ENCODE measurements at regions of chr22 and their contacts with region 1.

Region 1: DNA sequence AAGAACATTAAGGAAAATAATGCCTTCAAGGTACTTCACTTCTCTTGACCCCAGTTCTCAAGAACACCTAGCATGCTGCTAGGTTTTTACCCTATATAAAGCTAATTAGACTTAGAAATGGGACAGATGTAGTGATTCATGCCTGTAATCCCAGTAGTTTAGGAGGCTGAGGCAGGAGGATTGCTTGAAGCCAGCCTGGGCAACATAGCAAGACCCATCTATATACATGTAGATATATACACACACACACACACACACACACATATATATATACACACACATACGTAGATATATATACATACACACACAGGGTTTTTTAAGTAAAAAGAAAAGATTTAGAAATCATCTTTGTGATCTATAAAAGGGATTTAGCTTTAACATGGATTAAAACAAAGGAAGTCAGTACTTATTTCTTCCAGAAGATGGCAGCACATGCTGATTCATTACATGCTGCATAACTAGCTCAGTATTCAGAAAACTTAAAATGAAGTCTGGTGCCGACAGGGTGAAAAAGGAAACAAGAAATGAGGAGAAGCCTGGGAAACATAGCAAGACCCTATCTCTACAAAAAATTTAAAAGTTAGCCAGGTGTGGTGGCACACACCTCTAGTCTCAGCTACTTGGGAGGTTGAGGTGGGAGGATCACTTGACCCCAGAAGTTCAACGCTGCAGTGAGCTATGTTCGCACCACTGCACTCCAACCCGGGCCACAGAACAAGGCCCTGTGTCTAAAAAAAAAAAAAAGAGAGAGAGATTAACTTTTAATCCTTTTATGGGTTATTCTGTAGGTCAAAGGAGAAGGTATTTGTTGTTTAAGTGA is 28.5 kb upstream of the RBX1 start:
- H3K4me3 ChIP-seq: no peak overlapping the region
- H3K27ac ChIP-seq: no peak overlapping the region
- H3K4me1 ChIP-seq: no peaks in the 10 kb centered on the region
- CTCF ChIP-seq: 0 out of 2 replicates have a peak, but pooled peaks have one; percentile 49

Region 2: DNA sequence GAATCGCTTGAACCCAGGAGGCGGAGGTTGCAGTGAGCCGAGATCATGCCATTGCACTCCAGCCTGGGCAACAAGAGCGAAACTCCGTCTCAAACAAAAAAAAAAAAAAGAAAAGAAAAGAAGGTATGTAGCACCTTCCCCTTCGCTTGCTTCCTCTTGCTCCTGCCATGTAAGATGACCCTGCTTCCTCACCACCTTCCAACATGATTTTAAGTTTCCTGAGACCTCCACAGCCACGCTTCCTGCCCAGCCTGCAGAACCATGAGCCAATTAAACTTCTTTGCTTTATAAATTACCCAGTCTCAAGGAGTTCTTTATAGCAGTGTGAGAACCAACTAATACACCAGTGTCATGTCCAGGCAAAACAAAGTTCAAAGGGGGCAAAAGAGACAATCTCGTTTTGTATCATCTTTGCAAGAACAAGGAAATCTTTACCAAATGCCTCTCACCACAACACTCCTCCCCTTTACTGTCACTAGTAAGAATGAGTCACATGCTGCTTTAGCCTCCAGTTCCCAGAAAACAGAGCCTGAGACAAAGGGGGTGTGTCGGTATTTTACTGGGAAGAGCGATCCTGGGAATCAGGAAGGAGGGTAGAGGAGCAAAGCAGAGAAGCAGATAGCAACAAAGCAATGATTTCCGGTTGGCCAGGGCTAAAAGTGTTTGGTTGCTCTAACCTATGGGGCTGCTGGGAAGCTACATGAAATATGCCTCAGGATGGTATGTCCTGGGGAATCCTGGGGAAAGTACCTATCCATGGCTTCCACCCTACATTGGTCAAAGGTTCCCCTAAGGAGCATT is 253.9 kb before region 1 on chr22:
- CTCF ChIA-PET with region 1: no interaction called
- POLR2A ChIA-PET with region 1: no interaction called
- H3K4me3 ChIP-seq: no peak overlapping the region
- H3K27ac ChIP-seq: no peak overlapping the region
- H3K4me1 ChIP-seq: no peaks in the 10 kb centered on the region; the same call in 1 of the 2 replicates
- CTCF ChIP-seq: no peak

Region 3: GRCh38 chr22:40911772-40912171 is 10.9 kb before region 1 on chr22:
- CTCF ChIA-PET with region 1: interaction called, 18 read pairs
- POLR2A ChIA-PET with region 1: no interaction called
- H3K4me3 ChIP-seq: no peak overlapping the region
- H3K27ac ChIP-seq: no peak overlapping the region
- H3K4me1 ChIP-seq: no peaks in the 10 kb centered on the region
- CTCF ChIP-seq: no peak

Region 4: GRCh38 chr22:41001722-41002122 is 79.0 kb after region 1 on chr22:
- CTCF ChIA-PET with region 1: interaction called, 13 read pairs
- POLR2A ChIA-PET with region 1: no interaction called
- H3K4me3 ChIP-seq: no peak overlapping the region
- H3K27ac ChIP-seq: no peak overlapping the region
- H3K4me1 ChIP-seq: no peaks in the 10 kb centered on the region
- CTCF ChIP-seq: no peak

Region 5: GRCh38 chr22:41171996-41172395 is 249.3 kb after region 1 on chr22:
- CTCF ChIA-PET with region 1: interaction called, 10 read pairs
- POLR2A ChIA-PET with region 1: no interaction called
- H3K4me3 ChIP-seq: no peak overlapping the region
- H3K27ac ChIP-seq: 0 out of 2 replicates have a peak overlapping the region, but pooled peaks have one; percentile 41
- H3K4me1 ChIP-seq: no peaks in the 10 kb centered on the region
- CTCF ChIP-seq: no peak

Region 6: DNA sequence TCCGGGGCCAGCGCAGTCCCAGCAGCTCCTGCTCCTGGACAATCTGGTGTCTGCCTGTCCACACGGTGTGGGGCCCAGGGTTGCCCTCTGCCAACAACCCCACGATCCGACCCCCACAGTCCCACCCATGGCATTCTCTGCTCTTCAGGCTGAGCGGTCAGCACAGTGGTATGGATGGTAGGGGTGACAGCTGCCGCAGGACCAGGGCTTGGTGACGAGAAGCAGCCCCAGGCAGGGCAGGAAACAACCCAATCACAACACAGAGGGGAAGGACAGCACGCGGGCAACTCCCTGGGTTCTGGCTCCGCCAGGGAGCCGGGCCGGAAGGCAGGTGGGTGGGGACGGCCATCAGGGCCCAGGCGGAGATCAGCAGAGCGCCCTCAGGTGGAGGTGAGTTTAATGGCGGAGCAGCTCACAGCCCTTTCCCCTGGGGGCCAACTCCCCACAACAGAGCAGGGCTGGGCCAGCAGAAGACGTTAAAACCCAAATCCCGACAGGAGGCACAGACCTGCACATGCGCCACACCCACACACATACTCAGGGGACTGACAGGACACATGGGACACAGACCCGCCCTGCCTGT is 323.3 kb after region 1 on chr22:
- CTCF ChIA-PET with region 1: interaction called, 14 read pairs
- POLR2A ChIA-PET with region 1: no interaction called
- H3K4me3 ChIP-seq: no peak overlapping the region
- H3K27ac ChIP-seq: no peak overlapping the region
- H3K4me1 ChIP-seq: no peaks in the 10 kb centered on the region
- CTCF ChIP-seq: no peak

Region 7: DNA sequence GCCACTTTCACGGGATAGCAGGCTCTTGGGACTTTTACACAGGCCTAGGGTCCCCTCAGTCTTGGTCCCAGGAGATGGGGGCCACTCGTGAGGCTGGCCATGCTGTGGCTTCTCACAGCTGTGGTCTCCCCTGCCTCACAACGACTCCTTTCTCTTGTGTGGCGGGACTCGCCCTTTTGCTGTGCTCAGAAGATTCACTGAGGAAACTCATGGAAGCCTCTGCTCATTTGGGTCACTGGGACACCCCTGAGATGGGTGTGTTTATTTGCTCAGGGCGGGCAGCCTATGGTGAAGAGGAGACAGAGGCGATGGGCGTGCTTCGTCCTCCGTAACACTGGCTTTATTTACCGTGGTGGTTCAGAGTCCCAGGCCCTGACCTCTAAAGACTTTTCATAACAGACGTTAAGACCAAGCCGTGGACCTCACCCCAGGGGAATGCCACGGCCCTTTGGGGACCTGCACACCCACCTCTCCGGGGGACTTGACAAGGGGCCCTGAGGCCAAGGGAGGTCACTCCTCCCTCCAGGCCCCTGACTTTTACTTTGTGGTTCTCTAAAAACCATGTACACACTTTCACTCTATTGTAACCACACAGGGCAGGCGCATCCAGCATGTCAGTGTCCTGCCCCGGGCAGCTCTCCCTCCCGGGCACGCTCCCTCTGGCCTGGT is 474.6 kb after region 1 on chr22:
- CTCF ChIA-PET with region 1: no interaction called
- POLR2A ChIA-PET with region 1: no interaction called
- H3K4me3 ChIP-seq: no peak overlapping the region
- H3K27ac ChIP-seq: no peak overlapping the region
- H3K4me1 ChIP-seq: no peaks in the 10 kb centered on the region
- CTCF ChIP-seq: no peak